K562 (cell line): ENCODE measurements at regions of chr7 and their contacts with region 1.

Region 1: DNA sequence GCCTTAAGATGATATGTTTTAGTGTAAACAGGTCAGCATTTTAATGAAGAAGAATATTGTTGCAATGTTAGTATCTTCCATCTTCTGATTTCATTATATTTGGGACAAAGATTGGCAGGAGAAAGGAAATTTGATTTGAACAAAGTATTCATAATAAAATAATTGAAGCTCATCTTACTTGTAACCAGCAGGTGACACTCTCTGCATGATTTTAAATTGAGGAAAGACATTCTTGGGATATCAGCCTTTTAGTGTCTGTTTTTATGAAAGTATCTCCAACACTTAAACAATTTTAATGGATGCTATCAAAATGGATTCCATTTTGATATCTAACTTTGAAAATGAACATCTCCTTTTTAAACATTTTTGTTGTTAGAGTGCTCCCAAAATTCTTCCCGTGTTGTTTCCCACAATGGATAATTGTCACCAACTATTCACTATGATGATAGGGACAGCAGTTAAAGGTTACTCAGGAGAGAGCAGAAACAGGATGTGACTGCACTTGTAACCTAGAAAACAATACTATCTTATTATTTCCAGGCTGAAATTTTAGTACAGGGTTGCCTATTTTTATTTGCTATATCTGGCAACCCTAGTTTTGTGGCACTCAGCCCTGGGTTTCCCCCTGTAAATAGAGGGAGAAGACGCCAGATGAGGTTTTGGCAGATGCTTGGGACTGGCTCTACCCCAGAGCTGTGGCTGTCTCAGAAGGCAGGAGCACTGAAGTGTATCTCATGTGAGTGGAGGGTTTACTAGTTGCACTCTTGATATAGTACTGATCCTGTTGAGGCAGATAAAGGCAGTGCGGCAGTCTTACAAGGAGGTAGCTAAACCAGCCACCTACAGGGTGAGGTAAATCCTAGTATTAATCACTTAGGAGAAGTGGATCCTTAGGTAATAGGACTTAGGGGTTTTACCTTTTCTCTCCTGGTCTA is 31.0 kb upstream of the ABCB4 start:
- DNase-seq: peak in 1 of 4 experiments; percentile 16
- ATAC-seq: peak; percentile 41; the same call in 1 of the 3 replicates
- H3K4me3 ChIP-seq: no peak overlapping the region
- H3K27ac ChIP-seq: no peak overlapping the region
- H3K4me1 ChIP-seq: no peaks in the 10 kb centered on the region
- H3K27me3 ChIP-seq: no peaks in the 10 kb centered on the region
- CTCF ChIP-seq: peak in 2 of 3 experiments; percentile 14 to 60; a peak in 2 of 6 replicates
- EP300 ChIP-seq: no peak
- POLR2A ChIP-seq: no peak
- RAD21 ChIP-seq: peak; percentile 63 to 74

Region 2: DNA sequence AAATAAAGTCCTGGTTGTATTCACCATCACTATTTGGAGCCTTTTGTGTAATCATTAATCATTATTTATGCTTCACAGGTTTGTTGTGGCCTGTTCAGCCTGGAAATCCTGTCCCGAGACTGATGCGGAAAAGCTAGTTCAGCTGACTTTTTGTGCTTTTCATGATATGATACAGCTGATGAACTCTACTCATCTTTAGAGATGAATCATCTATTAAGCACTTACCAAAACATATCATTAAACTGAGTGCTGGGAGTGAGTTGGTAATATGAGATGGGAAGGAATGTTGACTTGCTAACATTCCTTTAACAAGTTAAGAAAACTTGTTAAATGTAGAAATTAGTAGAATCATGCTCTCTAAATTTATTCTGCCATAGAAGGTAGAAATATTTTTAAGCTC is 108.1 kb before region 1 on chr7:
- CTCF ChIA-PET with region 1: no interaction called
- POLR2A ChIA-PET with region 1: no interaction called
- in situ Hi-C with region 1: no loop called
- intact Hi-C with region 1: no loop called
- DNase-seq: no peak
- ATAC-seq: no peak
- H3K4me3 ChIP-seq: no peak overlapping the region
- H3K27ac ChIP-seq: no peak overlapping the region
- H3K4me1 ChIP-seq: no peaks in the 10 kb centered on the region; a peak in 1 of 5 replicates
- H3K27me3 ChIP-seq: no peaks in the 10 kb centered on the region
- CTCF ChIP-seq: no peak
- EP300 ChIP-seq: no peak
- POLR2A ChIP-seq: no peak
- RAD21 ChIP-seq: no peak

Region 3: DNA sequence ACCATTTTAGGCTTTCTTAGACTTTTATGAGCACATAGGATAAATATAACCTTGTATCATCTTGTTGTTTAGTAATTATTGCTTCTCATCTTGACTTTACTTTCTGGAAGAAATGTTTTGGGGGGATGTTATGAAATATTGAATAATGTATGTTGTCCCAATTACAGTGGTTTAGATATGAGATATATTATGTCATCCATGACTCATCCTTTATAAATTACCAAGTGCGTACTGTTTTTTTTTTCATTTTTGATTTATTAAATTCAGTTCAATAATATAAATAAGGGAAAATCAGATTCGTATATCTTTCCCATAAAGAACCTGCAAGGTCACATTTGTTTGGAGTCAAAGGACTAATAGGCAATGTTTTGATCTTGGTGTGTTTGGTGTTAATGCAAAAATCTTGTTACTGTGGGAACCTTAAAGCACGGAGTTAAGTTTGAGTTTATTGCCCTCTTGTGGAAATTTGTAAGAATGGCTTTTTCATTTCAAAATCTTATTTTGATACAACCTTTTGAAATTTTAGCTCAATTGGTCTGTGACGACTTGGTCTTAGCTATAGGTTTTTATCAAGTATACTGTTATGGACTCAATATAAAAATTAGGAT is 604.7 kb after region 1 on chr7:
- CTCF ChIA-PET with region 1: interaction called, 4 read pairs
- POLR2A ChIA-PET with region 1: no interaction called
- in situ Hi-C with region 1: no loop called
- intact Hi-C with region 1: loop called (anchors 5 kb)
- DNase-seq: peak; percentile 25 to 39 (median 31)
- ATAC-seq: peak; percentile 73
- H3K4me3 ChIP-seq: no peak overlapping the region
- H3K27ac ChIP-seq: no peak overlapping the region
- H3K4me1 ChIP-seq: no peaks in the 10 kb centered on the region
- H3K27me3 ChIP-seq: no peaks in the 10 kb centered on the region
- CTCF ChIP-seq: peak; percentile 30 to 75 (median 48); a peak in 3 of 6 replicates
- EP300 ChIP-seq: no peak
- POLR2A ChIP-seq: no peak
- RAD21 ChIP-seq: peak; percentile 78 to 84

Region 4: DNA sequence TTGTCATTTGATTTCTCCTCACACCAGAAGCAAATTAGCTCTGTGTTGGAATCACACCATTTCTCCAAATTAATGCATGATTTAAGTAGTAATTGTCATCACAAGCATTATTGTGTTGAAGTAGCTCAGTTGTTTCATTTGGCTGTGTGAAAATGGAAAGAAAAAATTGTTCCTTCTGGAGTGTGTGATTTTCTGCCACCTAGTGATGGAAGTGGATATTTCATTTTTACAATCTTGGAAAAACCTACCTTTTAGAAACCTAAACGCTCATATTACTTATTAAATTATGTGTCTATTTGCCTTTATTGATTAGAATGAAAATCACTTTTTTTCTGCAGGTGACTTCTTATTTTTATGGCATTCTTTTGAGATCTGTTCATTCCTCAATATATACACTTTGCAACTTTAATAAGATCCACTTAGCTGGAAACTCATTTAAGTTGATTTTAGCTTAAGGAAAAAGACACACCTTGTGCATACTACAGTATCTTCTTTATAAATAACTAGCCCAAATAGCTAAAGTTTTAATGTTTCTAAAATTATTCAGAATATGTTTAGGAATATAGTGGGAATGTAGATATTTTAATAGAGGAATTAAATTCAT is 663.3 kb after region 1 on chr7:
- CTCF ChIA-PET with region 1: no interaction called
- POLR2A ChIA-PET with region 1: no interaction called
- in situ Hi-C with region 1: no loop called
- intact Hi-C with region 1: loop called (anchors 5 kb)
- DNase-seq: peak in 3 of 4 experiments; percentile 9 to 28 (median 24)
- ATAC-seq: peak; percentile 62; the same call in 2 of the 3 replicates
- H3K4me3 ChIP-seq: no peak overlapping the region
- H3K27ac ChIP-seq: no peak overlapping the region
- H3K4me1 ChIP-seq: no peaks in the 10 kb centered on the region
- H3K27me3 ChIP-seq: no peaks in the 10 kb centered on the region; a peak in 1 of 5 replicates
- CTCF ChIP-seq: peak; percentile 20 to 63 (median 51); a peak in 4 of 6 replicates
- EP300 ChIP-seq: no peak
- POLR2A ChIP-seq: no peak
- RAD21 ChIP-seq: peak; percentile 39 to 59

Region 5: GRCh38 chr7:88344956-88345832 is 838.7 kb after region 1 on chr7:
- CTCF ChIA-PET with region 1: no interaction called
- POLR2A ChIA-PET with region 1: no interaction called
- in situ Hi-C with region 1: no loop called
- intact Hi-C with region 1: no loop called
- DNase-seq: peak; percentile 13 to 35 (median 22)
- ATAC-seq: peak; percentile 96
- H3K4me3 ChIP-seq: no peak overlapping the region
- H3K27ac ChIP-seq: no peak overlapping the region
- H3K4me1 ChIP-seq: no peaks in the 10 kb centered on the region
- H3K27me3 ChIP-seq: no peaks in the 10 kb centered on the region
- CTCF ChIP-seq: peak; percentile 34 to 50 (median 43); a peak in 4 of 6 replicates
- EP300 ChIP-seq: no peak
- POLR2A ChIP-seq: no peak
- RAD21 ChIP-seq: peak; percentile 12 to 31; a peak in 3 of 4 replicates